CD8-positive, alpha-beta T cell (primary cell): ENCODE measurements at regions of chr4 and their contacts with region 1.

Region 1: GRCh38 chr4:86313656-86314055 is 46.2 kb downstream of the MAPK10 start:
- DNase-seq: no peak
- ATAC-seq: no peak
- H3K4me3 ChIP-seq: no peak overlapping the region
- H3K4me3 Mint-ChIP-seq: no peak overlapping the region
- H3K27ac ChIP-seq: no peak overlapping the region
- H3K27ac Mint-ChIP-seq: no peak overlapping the region
- H3K4me1 ChIP-seq: no peaks in the 10 kb centered on the region
- H3K4me1 Mint-ChIP-seq: no peaks in the 10 kb centered on the region
- H3K27me3 ChIP-seq: no peaks in the 10 kb centered on the region
- H3K27me3 Mint-ChIP-seq: no peaks in the 10 kb centered on the region
- CTCF ChIP-seq: no peak

Region 2: GRCh38 chr4:86286726-86287125 is 26.9 kb before region 1 on chr4:
- CTCF ChIA-PET with region 1: no interaction called
- POLR2A ChIA-PET with region 1: no interaction called
- intact Hi-C with region 1: loop called in 1 of 2 experiments (anchors 1 kb)
- DNase-seq: no peak
- ATAC-seq: no peak
- H3K4me3 ChIP-seq: no peak overlapping the region
- H3K4me3 Mint-ChIP-seq: no peak overlapping the region
- H3K27ac ChIP-seq: no peak overlapping the region
- H3K27ac Mint-ChIP-seq: no peak overlapping the region
- H3K4me1 ChIP-seq: no peaks in the 10 kb centered on the region
- H3K4me1 Mint-ChIP-seq: no peaks in the 10 kb centered on the region
- H3K27me3 ChIP-seq: no peaks in the 10 kb centered on the region
- H3K27me3 Mint-ChIP-seq: no peaks in the 10 kb centered on the region
- CTCF ChIP-seq: no peak

Region 3: GRCh38 chr4:86346320-86346719 is 32.7 kb after region 1 on chr4:
- CTCF ChIA-PET with region 1: no interaction called
- POLR2A ChIA-PET with region 1: no interaction called
- intact Hi-C with region 1: no loop called
- DNase-seq: no peak
- ATAC-seq: no peak
- H3K4me3 ChIP-seq: no peak overlapping the region
- H3K4me3 Mint-ChIP-seq: no peak overlapping the region
- H3K27ac ChIP-seq: no peak overlapping the region
- H3K27ac Mint-ChIP-seq: no peak overlapping the region
- H3K4me1 ChIP-seq: no peaks in the 10 kb centered on the region
- H3K4me1 Mint-ChIP-seq: no peaks in the 10 kb centered on the region
- H3K27me3 ChIP-seq: no peaks in the 10 kb centered on the region
- H3K27me3 Mint-ChIP-seq: peaks cover 2% of the 10 kb centered on the region
- CTCF ChIP-seq: no peak